ENCODE measurements at regions of chr9 and their contacts with region 1.

Region 1: GRCh38 chr9:82299870-82300269 is 311.3 kb downstream of the SPATA31D1 start:
- DNase-seq: no peak
- ATAC-seq: no peak
- H3K4me3 ChIP-seq: no peak overlapping the region
- H3K27ac ChIP-seq: no peak overlapping the region
- H3K4me1 ChIP-seq: peaks cover 9 to 10% of the 10 kb centered on the region in 2 donors
- H3K27me3 ChIP-seq: no peaks in the 10 kb centered on the region
- CTCF ChIP-seq: no peak
- POLR2A ChIP-seq: no peak

Region 2: DNA sequence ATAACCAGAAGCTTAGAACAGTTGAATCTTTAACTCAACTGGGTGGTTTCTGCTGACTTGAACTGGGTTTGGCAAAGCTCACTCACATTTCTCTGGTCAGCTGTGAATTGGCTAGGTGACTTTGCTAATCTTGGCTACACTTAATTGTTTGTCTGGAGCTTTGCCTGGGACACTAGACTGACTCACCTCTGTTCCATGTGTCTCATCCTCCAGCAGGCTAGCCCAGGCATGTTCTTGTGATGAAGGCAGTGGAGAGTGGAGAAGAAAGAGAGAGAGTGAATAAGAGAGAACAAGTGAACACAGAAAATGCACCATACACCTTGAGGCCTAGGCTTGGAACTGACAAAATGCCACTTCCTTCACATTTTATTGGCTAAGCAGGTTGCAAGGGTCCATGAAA is 278.7 kb before region 1 on chr9:
- in situ Hi-C with region 1: no loop called
- intact Hi-C with region 1: loop called (anchors 2 kb)
- DNase-seq: peak; percentile 81 to 82
- ATAC-seq: peak; percentile 100
- H3K4me3 ChIP-seq: no peak overlapping the region
- H3K27ac ChIP-seq: peak overlapping the region; percentile 10 to 67 (median 44)
- H3K4me1 ChIP-seq: peaks cover 10 to 16% of the 10 kb centered on the region in 2 donors
- H3K27me3 ChIP-seq: no peaks in the 10 kb centered on the region
- CTCF ChIP-seq: no peak
- POLR2A ChIP-seq: no peak

Region 3: DNA sequence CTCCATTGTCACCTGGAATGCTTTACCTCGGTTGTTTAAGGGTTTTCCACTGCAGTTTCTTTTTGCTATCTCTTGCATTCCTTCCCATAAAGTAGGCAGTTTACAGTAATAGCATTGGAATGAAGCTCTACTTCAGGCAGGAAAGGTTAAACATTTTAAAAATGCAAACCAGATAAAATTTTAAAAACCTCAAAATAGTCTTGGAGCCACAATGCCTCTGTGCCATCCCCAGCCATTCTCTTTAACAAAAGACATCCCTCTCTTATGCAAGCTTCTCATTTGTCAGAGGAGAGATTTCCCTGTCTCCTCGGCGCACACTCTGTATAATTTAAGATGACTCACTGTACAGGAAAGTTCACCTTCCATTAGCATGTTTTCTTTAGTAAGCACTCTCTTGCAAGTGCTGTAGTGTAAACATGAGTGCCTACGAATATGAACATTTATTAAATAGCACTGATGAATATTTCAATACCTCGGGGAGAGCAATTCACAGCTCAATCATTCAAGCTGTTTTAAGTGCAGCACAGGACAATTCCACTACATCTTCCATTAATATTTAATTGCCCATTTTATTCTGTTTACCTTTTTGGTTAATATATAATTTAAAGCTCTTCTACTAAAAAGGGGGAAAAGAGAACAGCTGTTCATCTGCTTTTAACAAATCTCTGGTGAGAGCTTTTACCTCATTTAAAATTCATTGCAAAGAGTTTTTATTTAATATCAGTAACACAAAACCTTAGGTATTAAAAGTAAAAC is 32.3 kb after region 1 on chr9:
- in situ Hi-C with region 1: no loop called
- intact Hi-C with region 1: loop called (anchors 1 kb)
- DNase-seq: no peak
- ATAC-seq: peak; percentile 86 to 88
- H3K4me3 ChIP-seq: no peak overlapping the region
- H3K27ac ChIP-seq: peak overlapping the region; percentile 20 to 76 (median 52)
- H3K4me1 ChIP-seq: peaks cover 17 to 19% of the 10 kb centered on the region in 2 donors
- H3K27me3 ChIP-seq: no peaks in the 10 kb centered on the region
- CTCF ChIP-seq: no peak
- POLR2A ChIP-seq: no peak